ENCODE measurements at regions of chr11 and their contacts with region 1.

Region 1: GRCh38 chr11:131064373-131064991 is 148.2 kb upstream of the SNX19 start:
- DNase-seq: no peak

Region 2: DNA sequence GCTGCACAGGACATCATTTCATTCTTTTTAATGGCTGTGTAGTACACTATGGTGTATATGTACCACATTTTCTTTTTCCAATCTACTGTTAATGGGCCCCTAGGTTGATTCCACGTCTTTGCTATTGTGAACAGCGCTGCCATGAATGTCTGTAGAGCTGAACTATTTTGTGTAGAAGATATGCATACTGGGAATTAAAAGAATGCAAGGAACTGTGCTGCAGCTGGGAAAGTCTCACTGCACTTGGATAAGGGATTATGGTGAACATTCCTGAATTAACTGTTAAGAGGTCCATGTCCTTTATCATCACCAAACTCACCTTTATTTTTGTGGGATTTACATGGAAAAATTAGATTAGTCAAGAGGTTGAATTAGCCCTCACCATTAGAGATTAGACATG is 372.9 kb before region 1 on chr11:
- intact Hi-C with region 1: no loop called
- DNase-seq: no peak

Region 3: DNA sequence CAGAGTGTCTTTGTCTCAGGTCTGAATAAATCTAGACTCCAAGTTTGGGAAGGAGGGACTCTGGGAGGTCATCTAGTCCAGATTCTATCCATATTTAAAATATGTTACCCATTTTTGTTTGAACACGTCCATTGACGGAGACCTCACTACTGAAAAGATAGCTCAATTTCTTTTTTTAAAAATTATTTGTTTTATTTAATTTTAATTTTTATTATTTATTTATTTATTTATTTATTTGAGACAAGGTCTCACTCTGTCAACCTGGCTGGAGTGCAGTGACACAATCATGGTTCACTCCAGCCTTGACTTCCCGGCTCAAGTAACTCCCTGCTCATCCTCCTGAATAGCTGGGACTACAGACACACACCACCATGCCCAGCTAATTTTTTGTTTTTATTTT is 58.7 kb before region 1 on chr11:
- intact Hi-C with region 1: no loop called
- DNase-seq: no peak

Region 4: GRCh38 chr11:131178596-131178995 is 114.1 kb after region 1 on chr11:
- intact Hi-C with region 1: no loop called
- DNase-seq: no peak

Region 5: DNA sequence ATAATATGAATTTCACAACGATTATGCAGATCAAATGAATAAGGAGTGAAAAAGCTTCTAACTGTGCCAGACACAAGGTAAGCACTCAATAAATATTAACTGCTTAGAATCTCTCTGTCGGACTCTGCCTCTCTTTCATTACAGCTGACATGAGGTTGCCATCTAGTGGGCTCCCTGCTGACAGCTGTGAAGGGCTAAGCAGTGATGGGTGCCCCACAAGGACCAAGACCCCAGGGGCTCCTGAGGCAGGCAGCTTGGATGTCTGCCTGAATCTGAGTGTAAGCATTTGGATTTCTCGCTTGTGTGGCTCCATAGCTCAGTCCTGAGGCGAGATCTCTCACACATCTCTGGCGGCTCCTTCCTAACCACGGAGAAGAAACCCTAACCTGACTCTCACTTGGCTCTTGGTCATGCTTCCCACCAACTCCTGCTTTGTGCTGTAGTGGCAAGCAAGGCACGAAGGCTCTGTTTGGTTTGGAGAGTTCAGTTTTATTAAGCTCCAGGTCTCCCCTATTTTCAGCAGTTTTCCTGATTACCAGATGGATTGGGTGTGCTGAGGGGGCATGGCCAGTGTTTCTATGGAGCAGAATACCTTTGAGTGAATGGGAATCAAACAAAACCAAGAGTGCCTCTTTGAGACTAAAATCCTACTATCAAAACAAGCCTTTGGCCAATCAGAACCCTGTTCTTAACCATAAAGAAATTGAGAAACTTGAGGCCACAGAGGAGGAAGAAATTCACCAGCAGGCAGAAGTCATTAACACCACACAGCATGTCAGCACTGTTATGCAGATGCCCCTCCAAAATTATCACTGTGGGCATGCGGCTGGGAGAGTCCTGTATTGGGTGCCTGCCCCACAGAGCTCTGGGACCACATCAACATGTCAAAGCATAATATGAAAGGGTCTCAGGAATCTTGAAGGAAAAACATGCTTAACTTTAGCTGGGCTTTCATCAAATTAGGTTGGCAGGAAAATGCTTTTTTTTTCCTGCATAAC is 153.1 kb after region 1 on chr11:
- intact Hi-C with region 1: loop called (anchors 5 kb)
- DNase-seq: no peak

Region 6: GRCh38 chr11:131511794-131512193 is 447.3 kb after region 1 on chr11:
- intact Hi-C with region 1: loop called (anchors 10 kb)
- DNase-seq: no peak

Measured in cardiac septum (tissue), 1 donor.